CD4-positive, alpha-beta T cell (primary cell): ENCODE measurements at regions of chr11 and their contacts with region 1.

Region 1: GRCh38 chr11:32297611-32298011 is 137.7 kb downstream of the WT1 start:
- DNase-seq: peak in 3 of 14 experiments; percentile 16 to 24 (median 19)
- ATAC-seq: no peak
- H3K4me3 ChIP-seq: no peak overlapping the region
- H3K4me3 Mint-ChIP-seq: no peak overlapping the region
- H3K27ac ChIP-seq: no peak overlapping the region
- H3K27ac Mint-ChIP-seq: no peak overlapping the region
- H3K4me1 ChIP-seq: no peaks in the 10 kb centered on the region
- H3K4me1 Mint-ChIP-seq: no peaks in the 10 kb centered on the region
- H3K27me3 ChIP-seq: no peaks in the 10 kb centered on the region
- H3K27me3 Mint-ChIP-seq: no peaks in the 10 kb centered on the region
- CTCF ChIP-seq: peak; percentile 54

Region 2: GRCh38 chr11:31107062-31107461 is 1190.5 kb before region 1 on chr11:
- CTCF ChIA-PET with region 1: no interaction called
- POLR2A ChIA-PET with region 1: no interaction called
- intact Hi-C with region 1: loop called in 1 of 2 experiments (anchors 5 kb)
- DNase-seq: peak; percentile 1 to 53 (median 16)
- ATAC-seq: no peak
- H3K4me3 ChIP-seq: no peak overlapping the region
- H3K4me3 Mint-ChIP-seq: no peak overlapping the region
- H3K27ac ChIP-seq: no peak overlapping the region
- H3K27ac Mint-ChIP-seq: no peak overlapping the region
- H3K4me1 ChIP-seq: no peaks in the 10 kb centered on the region
- H3K4me1 Mint-ChIP-seq: no peaks in the 10 kb centered on the region
- H3K27me3 ChIP-seq: no peaks in the 10 kb centered on the region
- H3K27me3 Mint-ChIP-seq: no peaks in the 10 kb centered on the region
- CTCF ChIP-seq: no peak

Region 3: GRCh38 chr11:31240338-31240904 is 1057.2 kb before region 1 on chr11:
- CTCF ChIA-PET with region 1: no interaction called
- POLR2A ChIA-PET with region 1: no interaction called
- intact Hi-C with region 1: loop called in 1 of 2 experiments (anchors 2 kb)
- DNase-seq: peak in 7 of 14 experiments; percentile 0 to 59 (median 27)
- ATAC-seq: no peak
- H3K4me3 ChIP-seq: no peak overlapping the region
- H3K4me3 Mint-ChIP-seq: no peak overlapping the region
- H3K27ac ChIP-seq: no peak overlapping the region
- H3K27ac Mint-ChIP-seq: no peak overlapping the region
- H3K4me1 ChIP-seq: no peaks in the 10 kb centered on the region
- H3K4me1 Mint-ChIP-seq: no peaks in the 10 kb centered on the region
- H3K27me3 ChIP-seq: no peaks in the 10 kb centered on the region
- H3K27me3 Mint-ChIP-seq: peaks cover 5% of the 10 kb centered on the region
- CTCF ChIP-seq: peak; percentile 64

Region 4: DNA sequence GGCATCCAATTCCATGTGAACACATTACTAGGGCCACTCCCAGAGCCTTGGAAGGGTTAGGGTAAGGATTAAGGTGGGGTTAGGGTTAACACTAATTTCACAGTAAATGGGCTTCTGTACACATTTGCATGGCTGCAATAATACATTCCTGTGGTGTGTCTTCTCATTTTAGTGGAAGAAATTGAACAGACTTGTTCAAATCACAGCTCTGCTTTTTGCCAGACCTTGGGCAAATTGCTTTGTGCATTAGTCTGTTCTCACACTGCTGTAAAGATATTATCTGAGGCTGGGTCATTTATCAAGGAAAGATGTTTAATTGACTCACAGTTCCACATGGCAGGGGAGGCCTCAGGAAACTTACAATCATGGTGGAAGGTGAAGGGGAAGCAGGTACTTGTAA is 252.2 kb before region 1 on chr11:
- CTCF ChIA-PET with region 1: no interaction called
- POLR2A ChIA-PET with region 1: no interaction called
- intact Hi-C with region 1: loop called in 1 of 2 experiments (anchors 5 kb)
- DNase-seq: no peak
- ATAC-seq: no peak
- H3K4me3 ChIP-seq: no peak overlapping the region
- H3K4me3 Mint-ChIP-seq: no peak overlapping the region
- H3K27ac ChIP-seq: no peak overlapping the region
- H3K27ac Mint-ChIP-seq: no peak overlapping the region
- H3K4me1 ChIP-seq: no peaks in the 10 kb centered on the region
- H3K4me1 Mint-ChIP-seq: no peaks in the 10 kb centered on the region
- H3K27me3 ChIP-seq: peaks cover 0 to 15% of the 10 kb centered on the region in 2 experiments
- H3K27me3 Mint-ChIP-seq: peaks cover 51% of the 10 kb centered on the region
- CTCF ChIP-seq: no peak

Region 5: DNA sequence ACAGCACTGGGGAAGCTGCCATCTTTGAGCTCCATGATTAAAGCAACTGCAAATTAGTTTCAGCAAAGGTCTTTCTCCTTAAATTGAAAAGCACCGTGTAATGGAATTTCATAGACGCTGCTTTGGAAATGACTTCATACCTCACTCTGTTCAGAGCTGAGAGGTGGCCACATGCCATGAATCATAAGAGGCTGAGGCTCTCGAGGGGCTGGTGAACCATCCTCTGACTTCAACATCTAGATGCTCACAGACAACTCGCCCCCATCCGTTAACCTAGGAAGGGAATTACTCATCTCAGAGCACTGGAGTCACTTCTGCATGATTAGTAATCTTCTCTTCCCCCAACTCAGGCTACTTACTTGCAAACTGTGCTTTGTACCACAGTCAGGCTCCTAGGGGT is 84.4 kb before region 1 on chr11:
- CTCF ChIA-PET with region 1: no interaction called
- POLR2A ChIA-PET with region 1: no interaction called
- intact Hi-C with region 1: no loop called
- DNase-seq: no peak
- ATAC-seq: no peak
- H3K4me3 ChIP-seq: no peak overlapping the region
- H3K4me3 Mint-ChIP-seq: no peak overlapping the region
- H3K27ac ChIP-seq: no peak overlapping the region
- H3K27ac Mint-ChIP-seq: no peak overlapping the region
- H3K4me1 ChIP-seq: no peaks in the 10 kb centered on the region
- H3K4me1 Mint-ChIP-seq: no peaks in the 10 kb centered on the region
- H3K27me3 ChIP-seq: peaks cover 0 to 3% of the 10 kb centered on the region in 2 experiments
- H3K27me3 Mint-ChIP-seq: peaks cover 29% of the 10 kb centered on the region
- CTCF ChIP-seq: no peak